PC-3 (cell line): ENCODE measurements at regions of chr11 and their contacts with region 1.

Region 1: GRCh38 chr11:99773646-99774045 is 752.9 kb downstream of the CNTN5 start:
- DNase-seq: no peak
- ATAC-seq: no peak
- H3K4me3 ChIP-seq: no peak overlapping the region
- H3K27ac ChIP-seq: no peak overlapping the region
- H3K4me1 ChIP-seq: no peaks in the 10 kb centered on the region
- H3K27me3 ChIP-seq: 0 out of 2 replicates have a peak, but pooled peaks cover 20% of the 10 kb centered on the region
- CTCF ChIP-seq: no peak

Region 2: DNA sequence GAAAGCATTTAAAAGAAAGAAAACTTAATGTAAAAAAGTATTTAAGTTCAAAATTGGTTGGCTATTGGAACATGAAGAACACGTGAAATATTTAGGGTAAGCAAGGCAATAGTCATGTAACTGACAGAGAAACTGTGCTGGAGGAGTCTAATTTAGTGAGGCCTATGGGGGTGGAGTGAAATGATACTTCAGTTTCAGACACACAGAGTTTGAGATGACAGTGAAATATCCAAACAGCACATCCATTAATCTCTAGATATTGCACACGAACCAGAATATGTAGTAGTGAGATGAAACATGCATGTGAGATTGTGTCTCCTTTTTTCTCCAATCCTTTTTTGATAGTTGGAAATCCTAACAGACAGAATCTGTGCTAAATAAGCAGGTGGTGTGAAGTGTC is 13.9 kb before region 1 on chr11:
- CTCF ChIA-PET with region 1: no interaction called
- POLR2A ChIA-PET with region 1: no interaction called
- intact Hi-C with region 1: loop called (anchors 1 kb)
- DNase-seq: no peak
- ATAC-seq: no peak
- H3K4me3 ChIP-seq: no peak overlapping the region
- H3K27ac ChIP-seq: no peak overlapping the region
- H3K4me1 ChIP-seq: no peaks in the 10 kb centered on the region
- H3K27me3 ChIP-seq: peaks cover 27% of the 10 kb centered on the region
- CTCF ChIP-seq: no peak